AG04449 (cell line): ENCODE measurements at regions of chr1 and their contacts with region 1.

Region 1: DNA sequence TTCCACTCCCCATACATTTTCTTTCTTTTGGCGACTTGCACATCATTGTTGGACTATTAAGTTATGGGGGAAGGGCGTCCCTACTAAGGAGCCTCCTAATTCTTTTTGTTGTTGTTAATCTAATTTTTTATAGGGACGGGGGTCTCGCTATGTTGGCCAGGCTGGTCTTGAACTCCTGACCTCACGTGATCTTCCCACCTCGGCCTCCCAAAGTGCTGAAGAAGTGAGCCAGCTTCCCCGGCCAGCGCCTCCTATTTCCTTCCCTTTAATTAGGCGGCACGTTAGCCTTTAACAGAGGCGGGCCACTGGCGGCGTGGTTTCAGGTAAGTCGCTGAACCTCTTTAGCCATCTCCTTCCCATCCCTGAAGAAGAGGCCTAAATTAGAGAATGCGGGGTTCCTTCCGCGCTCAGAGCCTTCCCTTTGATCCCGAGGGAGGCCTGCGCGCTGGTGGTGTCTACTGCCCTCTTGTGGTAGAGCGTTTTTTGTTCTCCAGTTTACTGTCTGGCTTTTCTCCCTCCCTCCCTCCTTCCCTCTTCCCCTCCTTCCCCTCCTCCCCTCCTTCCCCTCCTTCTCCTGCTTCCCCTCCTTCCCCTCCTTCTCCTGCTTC is 38.1 kb downstream of the TNFRSF9 start:
- DNase-seq: no peak
- H3K4me3 ChIP-seq: no peak overlapping the region
- CTCF ChIP-seq: peak; percentile 82

Region 2: GRCh38 chr1:7808253-7808844 is 94.2 kb before region 1 on chr1:
- CTCF ChIA-PET with region 1: interaction called, 13 read pairs
- POLR2A ChIA-PET with region 1: no interaction called
- DNase-seq: no peak
- H3K4me3 ChIP-seq: no peak overlapping the region
- CTCF ChIP-seq: peak; percentile 39

Region 3: GRCh38 chr1:7912743-7913557 is 10.4 kb after region 1 on chr1:
- CTCF ChIA-PET with region 1: interaction called, 13 read pairs
- POLR2A ChIA-PET with region 1: no interaction called
- DNase-seq: no peak
- H3K4me3 ChIP-seq: no peak overlapping the region
- CTCF ChIP-seq: no peak